AG04449 (cell line): ENCODE measurements at regions of chr2 and their contacts with region 1.

Region 1: DNA sequence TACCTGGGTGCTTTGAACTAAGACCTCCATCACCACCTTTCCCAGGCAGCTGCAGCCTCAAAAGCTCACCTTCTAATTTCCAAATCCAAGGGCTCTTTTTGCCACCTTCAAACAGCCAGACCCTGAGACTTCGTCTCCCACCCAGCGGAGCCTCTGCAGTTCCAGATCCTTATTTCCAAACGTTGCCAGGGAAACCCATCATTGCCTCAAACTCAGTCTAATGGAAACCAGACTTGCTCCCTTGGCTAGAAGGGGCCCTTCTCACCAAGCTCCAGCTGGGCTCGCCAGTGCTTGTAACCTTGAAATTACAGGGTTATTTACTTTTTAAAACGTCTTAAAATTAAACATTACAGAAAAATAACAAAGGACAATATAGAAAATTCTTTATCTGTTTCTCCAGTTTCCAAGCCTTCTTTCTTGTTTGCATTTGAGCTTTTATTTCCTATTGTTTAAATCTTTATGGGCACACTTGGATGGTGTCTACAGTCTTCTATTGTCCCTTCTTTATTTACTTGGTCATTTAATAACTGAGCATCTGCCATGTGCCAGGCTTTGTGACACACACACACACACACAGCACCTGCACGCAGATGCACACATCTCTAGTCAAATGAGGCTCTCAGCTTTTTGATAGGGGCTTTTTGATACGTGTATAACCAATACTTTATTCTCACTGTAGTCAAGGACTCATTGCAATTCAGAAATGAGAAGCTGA is 36.1 kb downstream of the TRPM8 start:
- DNase-seq: no peak
- H3K4me3 ChIP-seq: no peak overlapping the region
- CTCF ChIP-seq: no peak

Region 2: DNA sequence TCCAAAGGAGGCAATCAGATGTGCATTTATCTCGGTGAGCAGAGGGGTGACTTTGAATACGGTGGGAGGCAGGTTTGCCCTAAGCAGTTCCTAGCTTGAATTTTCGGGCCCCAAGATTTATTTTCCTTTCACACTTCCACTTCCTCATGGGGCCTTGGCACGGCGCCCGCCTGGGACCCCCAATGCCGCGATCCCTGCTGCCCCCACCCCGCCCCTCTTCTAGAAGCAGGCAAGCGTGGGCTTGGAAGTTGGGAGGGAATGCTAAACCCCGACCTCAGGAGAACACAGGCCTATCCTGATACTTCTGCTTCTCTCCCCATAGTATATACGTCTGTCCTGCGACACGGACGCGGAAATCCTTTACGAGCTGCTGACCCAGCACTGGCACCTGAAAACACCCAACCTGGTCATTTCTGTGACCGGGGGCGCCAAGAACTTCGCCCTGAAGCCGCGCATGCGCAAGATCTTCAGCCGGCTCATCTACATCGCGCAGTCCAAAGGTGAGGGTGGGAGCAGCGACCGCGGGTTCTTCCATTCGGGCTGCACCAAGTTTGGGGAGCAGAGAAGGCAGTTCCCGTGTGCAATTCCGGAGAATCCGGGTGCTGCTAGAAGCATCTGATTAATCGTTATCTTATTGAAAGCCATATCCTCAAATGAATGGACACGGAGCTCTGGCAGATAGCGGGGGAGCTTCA is 14.4 kb before region 1 on chr2:
- CTCF ChIA-PET with region 1: no interaction called
- POLR2A ChIA-PET with region 1: no interaction called
- DNase-seq: no peak
- H3K4me3 ChIP-seq: no peak overlapping the region
- CTCF ChIP-seq: no peak

Region 3: DNA sequence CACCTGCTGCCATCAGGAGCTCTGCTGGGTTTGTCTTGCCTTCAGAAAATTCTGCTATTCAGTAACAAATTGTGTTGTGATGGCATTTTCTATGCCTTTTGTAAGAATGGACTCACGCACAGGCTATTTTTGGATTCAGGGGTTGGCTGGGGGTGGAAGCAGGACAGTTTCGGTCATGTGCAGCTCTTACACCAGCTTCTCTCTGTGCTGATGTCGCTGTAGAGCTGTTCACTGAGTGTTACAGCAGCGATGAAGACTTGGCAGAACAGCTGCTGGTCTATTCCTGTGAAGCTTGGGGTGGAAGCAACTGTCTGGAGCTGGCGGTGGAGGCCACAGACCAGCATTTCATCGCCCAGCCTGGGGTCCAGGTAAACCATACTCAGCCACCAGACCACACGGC is 13.1 kb after region 1 on chr2:
- CTCF ChIA-PET with region 1: interaction called, 10 read pairs
- POLR2A ChIA-PET with region 1: no interaction called
- DNase-seq: no peak
- H3K4me3 ChIP-seq: no peak overlapping the region
- CTCF ChIP-seq: no peak

Region 4: DNA sequence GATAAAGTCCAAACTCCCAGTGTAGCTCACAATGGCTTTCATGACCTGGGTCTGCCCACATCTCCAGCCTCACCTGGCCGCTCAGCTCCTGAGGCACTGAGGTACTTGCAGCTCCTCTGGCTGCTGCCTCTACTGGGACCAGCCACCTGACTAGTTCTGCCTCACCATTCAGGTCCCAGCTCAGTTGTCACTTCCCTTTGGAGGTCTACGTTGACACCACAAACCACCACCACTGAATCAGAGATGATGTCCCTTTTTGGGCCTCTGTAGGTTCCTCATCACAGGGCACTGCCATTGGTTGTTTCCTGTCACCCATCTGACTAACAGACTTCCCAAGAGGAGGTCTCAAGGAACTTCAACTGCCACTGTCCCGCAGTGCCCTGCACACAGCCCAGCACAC is 118.4 kb after region 1 on chr2:
- CTCF ChIA-PET with region 1: no interaction called
- POLR2A ChIA-PET with region 1: no interaction called
- DNase-seq: no peak
- H3K4me3 ChIP-seq: no peak overlapping the region
- CTCF ChIP-seq: no peak